ENCODE measurements at regions of chr4 and their contacts with region 1.

Region 1: GRCh38 chr4:89836897-89837384 is at the start of gene SNCA:
- DNase-seq: peak; percentile 63 to 93 (median 82)
- H3K4me3 ChIP-seq: peak within 1 kb of the TSS; percentile 64 to 94 (median 80)
- H3K27ac ChIP-seq: peak within 1 kb of the TSS; percentile 41 to 96 (median 91)
- H3K27me3 ChIP-seq: no peaks in the 10 kb centered on the region
- CTCF ChIP-seq: peak in 3 of 56 donors; percentile 4 to 19 (median 15)
- total RNA-seq, gene SNCA: 94.8 to 448 (median 257) TPM

Region 2: DNA sequence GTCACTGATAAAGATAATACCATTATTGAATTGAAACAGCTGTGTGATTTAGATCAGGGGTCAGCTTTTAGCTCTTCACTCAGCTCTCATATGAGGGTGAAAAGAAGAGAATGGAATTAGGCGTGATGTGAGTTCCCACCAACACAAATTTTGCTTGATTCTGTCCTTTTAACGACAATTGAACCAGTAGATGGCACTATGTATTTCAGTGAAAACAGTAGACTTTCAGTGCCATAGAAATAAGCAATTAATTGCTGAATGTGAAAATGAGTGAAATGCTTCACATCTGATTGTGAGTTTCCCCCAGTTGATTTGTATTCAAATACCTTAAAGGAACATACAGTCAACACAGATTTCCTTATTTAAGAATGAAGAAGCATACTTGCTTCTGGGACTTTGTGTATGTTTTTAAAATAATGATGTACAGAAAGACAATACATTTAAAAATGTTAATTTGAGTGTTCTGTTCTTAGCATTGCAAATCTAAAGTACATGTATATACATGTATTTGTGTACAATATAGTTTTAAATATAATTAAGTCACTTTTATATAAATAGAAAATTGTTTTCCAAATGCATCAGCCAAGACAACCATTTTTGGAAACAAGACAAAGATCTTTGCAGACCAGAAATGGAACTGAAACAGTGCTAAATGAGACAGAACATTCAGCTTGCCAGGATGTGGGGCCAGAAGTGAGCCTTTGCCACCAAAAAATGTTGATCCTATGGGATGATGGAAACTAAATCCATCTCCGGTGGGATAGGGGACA is 178.8 kb before region 1 on chr4:
- intact Hi-C with region 1: loop called in 1 of 2 experiments (anchors 5 kb)
- DNase-seq: no peak
- H3K4me3 ChIP-seq: no peak overlapping the region
- H3K27ac ChIP-seq: no peak overlapping the region
- H3K27me3 ChIP-seq: no peaks in the 10 kb centered on the region
- CTCF ChIP-seq: peak; percentile 22 to 91 (median 68)

Region 3: DNA sequence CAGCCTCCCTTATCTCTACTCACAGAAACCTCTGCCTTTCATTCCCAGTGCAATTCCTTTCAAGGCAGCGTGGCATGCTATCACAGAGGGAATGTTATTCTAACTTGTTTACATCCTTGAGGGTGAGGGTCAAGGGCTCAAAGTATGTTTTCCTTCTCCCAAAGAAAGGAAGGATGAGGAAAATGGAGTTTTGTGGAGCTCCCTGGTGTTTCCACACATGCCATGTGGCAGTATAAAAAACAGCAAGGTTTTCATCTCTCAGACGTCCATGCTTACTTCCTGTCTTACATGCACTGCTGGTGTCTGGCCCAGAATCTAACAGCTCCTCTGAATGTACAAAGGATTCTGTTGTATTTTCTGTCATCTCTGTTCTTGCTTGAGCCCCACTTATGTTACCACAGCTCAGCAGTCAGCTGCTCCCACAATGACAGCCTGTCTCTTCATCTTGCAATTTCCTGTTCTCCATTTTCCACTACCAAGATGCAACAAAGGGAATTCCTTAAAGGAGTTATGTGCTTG is 128.0 kb before region 1 on chr4:
- intact Hi-C with region 1: loop called (anchors 5 to 10 kb)
- DNase-seq: peak in 4 of 10 donors; percentile 5 to 66 (median 36)
- H3K4me3 ChIP-seq: peak overlapping the region in 13 of 59 donors; percentile 1 to 24 (median 18)
- H3K27ac ChIP-seq: peak overlapping the region in 57 of 59 donors; percentile 7 to 86 (median 70)
- H3K27me3 ChIP-seq: no peaks in the 10 kb centered on the region
- CTCF ChIP-seq: peak in 3 of 56 donors; percentile 11 to 20 (median 14)

Region 4: GRCh38 chr4:89765966-89766365 is 71.0 kb before region 1 on chr4:
- intact Hi-C with region 1: loop called in 1 of 2 experiments (anchors 10 kb)
- DNase-seq: peak in 1 of 10 donors; percentile 76
- H3K4me3 ChIP-seq: peak overlapping the region in 2 of 59 donors; percentile 6 to 12
- H3K27ac ChIP-seq: peak overlapping the region in 37 of 59 donors; percentile 8 to 75 (median 44)
- H3K27me3 ChIP-seq: no peaks in the 10 kb centered on the region
- CTCF ChIP-seq: no peak

Measured in dorsolateral prefrontal cortex (tissue), 120 donors.